Breast epithelium (tissue), 4 donors: ENCODE measurements at regions of chrX and their contacts with region 1.

Region 1: GRCh38 chrX:130699618-130700017 is 203.4 kb downstream of the ENOX2 start:
- DNase-seq: no peak
- H3K4me3 ChIP-seq: no peak overlapping the region
- H3K27ac ChIP-seq: no peak overlapping the region
- H3K4me1 ChIP-seq: no peaks in the 10 kb centered on the region
- H3K27me3 ChIP-seq: peaks cover 0 to 5% of the 10 kb centered on the region in 2 donors
- CTCF ChIP-seq: no peak
- POLR2A ChIP-seq: no peak

Region 2: DNA sequence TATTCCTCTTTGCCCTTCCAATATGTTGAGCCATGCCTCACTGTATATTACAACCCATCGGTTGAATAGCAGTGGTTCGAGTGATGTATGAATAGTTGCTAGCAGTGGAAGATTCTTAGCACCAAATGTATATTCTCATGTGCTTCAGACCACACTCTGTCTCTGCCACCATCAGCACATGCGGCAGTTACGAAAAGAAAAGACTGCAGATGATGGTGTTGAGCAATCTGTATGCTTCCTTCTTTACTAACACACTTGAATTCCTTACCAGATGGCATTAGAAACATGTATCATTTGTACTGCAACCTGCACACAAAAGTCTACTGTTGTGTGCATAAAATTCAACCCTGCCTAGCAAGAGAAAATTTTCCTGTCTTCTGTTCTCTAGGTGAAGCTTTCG is 11.3 kb before region 1 on chrX:
- intact Hi-C with region 1: loop called (anchors 1 kb)
- DNase-seq: no peak
- H3K4me3 ChIP-seq: no peak overlapping the region
- H3K27ac ChIP-seq: no peak overlapping the region
- H3K4me1 ChIP-seq: no peaks in the 10 kb centered on the region
- H3K27me3 ChIP-seq: peaks cover 0 to 10% of the 10 kb centered on the region in 2 donors
- CTCF ChIP-seq: no peak
- POLR2A ChIP-seq: no peak